ENCODE measurements at regions of chr14 and their contacts with region 1.

Region 1: GRCh38 chr14:68510201-68511128 is 282.4 kb downstream of the ZFP36L1 start:
- DNase-seq: peak; percentile 91
- H3K4me3 ChIP-seq: no peak overlapping the region
- H3K27ac ChIP-seq: peak overlapping the region; percentile 59 to 83 (median 76)
- H3K4me1 ChIP-seq: peaks cover 0 to 79% (median 67%) of the 10 kb centered on the region in 4 donors
- H3K27me3 ChIP-seq: no peaks in the 10 kb centered on the region
- CTCF ChIP-seq: no peak
- EP300 ChIP-seq: no peak
- POLR2A ChIP-seq: no peak

Region 2: DNA sequence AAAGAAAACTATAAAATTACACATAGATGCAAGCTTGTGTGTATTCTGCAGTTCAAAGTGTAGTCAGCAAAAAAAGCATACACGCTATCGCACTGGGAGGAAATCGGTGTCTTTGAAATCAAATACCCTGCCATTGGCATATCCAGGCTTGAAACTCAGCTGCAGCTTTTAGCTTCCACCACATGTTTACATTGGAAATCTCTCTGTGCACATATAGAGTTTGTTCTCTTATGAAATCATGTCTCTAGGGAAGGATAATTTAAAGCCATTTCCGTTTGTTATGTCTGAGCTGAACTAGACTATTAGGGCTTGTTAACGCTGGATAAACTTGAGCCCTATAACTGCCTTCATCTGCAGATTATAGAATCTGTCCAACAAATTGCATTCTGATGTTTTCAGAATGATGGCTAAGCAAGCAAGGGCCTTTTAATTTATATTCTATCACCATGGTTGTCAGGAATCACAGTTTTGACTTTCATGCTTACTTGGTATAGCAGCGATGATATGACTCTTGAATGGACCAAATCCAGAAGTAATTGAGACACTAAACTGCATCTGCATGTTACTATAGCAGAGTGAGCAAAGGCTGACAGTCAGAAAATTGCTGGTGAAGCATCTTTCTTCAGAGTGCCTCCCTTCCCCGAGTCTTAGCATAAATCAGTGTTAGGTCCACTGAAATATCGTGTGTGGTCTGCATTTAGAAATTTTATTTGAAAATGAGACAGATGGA is 160.4 kb before region 1 on chr14:
- intact Hi-C with region 1: no loop called
- DNase-seq: no peak
- H3K4me3 ChIP-seq: no peak overlapping the region
- H3K27ac ChIP-seq: peak overlapping the region in 1 of 4 donors; percentile 13
- H3K4me1 ChIP-seq: peaks cover 0 to 34% (median 27%) of the 10 kb centered on the region in 4 donors
- H3K27me3 ChIP-seq: no peaks in the 10 kb centered on the region
- CTCF ChIP-seq: no peak
- EP300 ChIP-seq: no peak
- POLR2A ChIP-seq: no peak

Region 3: DNA sequence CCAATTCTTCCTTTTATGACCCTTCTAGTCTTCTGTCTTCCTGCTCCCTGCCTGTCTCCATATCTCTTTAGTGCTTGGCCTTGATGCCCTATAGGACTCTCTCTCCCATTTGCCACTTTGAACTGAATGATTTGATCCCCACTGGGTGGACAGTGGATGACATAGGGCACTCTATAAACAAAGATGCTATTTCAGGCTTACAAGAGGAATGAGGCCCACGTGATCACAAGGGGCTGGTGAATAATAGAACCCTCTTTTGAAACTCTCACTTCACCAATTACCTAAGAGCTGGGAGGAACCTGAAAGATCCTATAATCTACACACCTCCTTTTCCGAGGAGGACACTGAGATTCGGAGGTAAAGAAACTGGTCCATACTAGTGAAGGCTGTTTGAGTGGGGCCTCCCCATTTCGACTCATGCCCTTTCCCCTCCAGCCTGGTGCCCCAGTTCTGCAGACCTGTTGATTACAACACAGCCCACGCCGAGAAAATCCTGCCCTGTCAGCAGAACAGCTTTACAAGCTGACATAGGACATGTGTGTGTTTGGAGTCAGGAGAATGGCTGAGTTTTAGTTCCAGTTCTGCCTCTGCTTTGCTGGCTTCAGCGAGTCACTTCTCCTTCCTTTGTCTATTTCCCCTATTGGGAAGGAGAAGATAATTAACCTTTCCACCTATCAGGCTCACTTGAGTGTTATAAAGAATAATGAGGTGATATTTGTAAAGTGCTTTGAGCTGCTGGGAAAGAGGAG is 117.9 kb before region 1 on chr14:
- intact Hi-C with region 1: loop called (anchors 5 kb)
- DNase-seq: peak; percentile 86
- H3K4me3 ChIP-seq: no peak overlapping the region
- H3K27ac ChIP-seq: peak overlapping the region; percentile 65 to 77 (median 75)
- H3K4me1 ChIP-seq: peaks cover 0 to 87% (median 64%) of the 10 kb centered on the region in 4 donors
- H3K27me3 ChIP-seq: no peaks in the 10 kb centered on the region
- CTCF ChIP-seq: no peak
- EP300 ChIP-seq: no peak
- POLR2A ChIP-seq: no peak

Region 4: DNA sequence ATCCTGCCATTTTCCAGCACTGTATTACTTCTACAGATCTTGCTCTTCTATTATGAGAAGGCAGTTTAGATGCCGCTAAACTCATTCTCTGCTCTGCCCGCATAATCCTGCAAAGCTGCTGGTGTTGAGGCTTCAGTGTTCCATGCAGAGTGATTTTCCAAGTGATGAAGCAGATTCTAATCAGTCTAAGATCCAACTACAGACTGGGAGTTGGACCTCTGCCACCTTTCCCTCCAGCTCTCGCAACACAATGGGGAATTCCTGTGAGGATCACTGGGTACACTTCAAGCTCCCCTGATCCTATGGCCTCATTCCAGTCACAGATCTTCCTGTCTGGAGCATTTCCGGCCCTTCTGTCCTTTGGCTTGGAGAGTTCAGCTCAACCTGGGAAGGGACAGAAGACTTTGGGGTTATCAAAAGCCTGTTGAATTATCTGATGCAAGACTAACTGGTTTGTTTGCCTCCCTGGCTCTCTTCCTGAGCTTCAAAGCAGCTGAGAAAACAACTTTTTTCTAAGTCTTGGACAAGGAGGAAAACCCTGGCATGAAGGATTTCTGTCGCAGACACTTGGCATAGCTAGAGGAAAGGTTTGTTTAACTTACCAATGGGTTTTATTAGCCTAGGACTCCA is 51.5 kb before region 1 on chr14:
- intact Hi-C with region 1: loop called (anchors 10 kb)
- DNase-seq: peak; percentile 77
- H3K4me3 ChIP-seq: no peak overlapping the region
- H3K27ac ChIP-seq: peak overlapping the region; percentile 54 to 74 (median 68)
- H3K4me1 ChIP-seq: peaks cover 0 to 28% (median 16%) of the 10 kb centered on the region in 4 donors
- H3K27me3 ChIP-seq: no peaks in the 10 kb centered on the region
- CTCF ChIP-seq: no peak
- EP300 ChIP-seq: no peak
- POLR2A ChIP-seq: no peak

Region 5: GRCh38 chr14:68633071-68633991 is 122.9 kb after region 1 on chr14:
- intact Hi-C with region 1: no loop called
- DNase-seq: peak; percentile 80
- H3K4me3 ChIP-seq: no peak overlapping the region
- H3K27ac ChIP-seq: peak overlapping the region; percentile 61 to 75 (median 72)
- H3K4me1 ChIP-seq: peaks cover 0 to 77% (median 58%) of the 10 kb centered on the region in 4 donors
- H3K27me3 ChIP-seq: no peaks in the 10 kb centered on the region
- CTCF ChIP-seq: no peak
- EP300 ChIP-seq: no peak
- POLR2A ChIP-seq: no peak